GM10248 (cell line): ENCODE measurements at regions of chr3 and their contacts with region 1.

Region 1: GRCh38 chr3:124552239-124552638 is 178.0 kb upstream of the UMPS start:
- DNase-seq: no peak
- CTCF ChIP-seq: no peak

Region 2: GRCh38 chr3:123272547-123272946 is 1279.7 kb before region 1 on chr3:
- CTCF ChIA-PET with region 1: no interaction called
- POLR2A ChIA-PET with region 1: no interaction called
- DNase-seq: no peak
- CTCF ChIP-seq: no peak

Region 3: DNA sequence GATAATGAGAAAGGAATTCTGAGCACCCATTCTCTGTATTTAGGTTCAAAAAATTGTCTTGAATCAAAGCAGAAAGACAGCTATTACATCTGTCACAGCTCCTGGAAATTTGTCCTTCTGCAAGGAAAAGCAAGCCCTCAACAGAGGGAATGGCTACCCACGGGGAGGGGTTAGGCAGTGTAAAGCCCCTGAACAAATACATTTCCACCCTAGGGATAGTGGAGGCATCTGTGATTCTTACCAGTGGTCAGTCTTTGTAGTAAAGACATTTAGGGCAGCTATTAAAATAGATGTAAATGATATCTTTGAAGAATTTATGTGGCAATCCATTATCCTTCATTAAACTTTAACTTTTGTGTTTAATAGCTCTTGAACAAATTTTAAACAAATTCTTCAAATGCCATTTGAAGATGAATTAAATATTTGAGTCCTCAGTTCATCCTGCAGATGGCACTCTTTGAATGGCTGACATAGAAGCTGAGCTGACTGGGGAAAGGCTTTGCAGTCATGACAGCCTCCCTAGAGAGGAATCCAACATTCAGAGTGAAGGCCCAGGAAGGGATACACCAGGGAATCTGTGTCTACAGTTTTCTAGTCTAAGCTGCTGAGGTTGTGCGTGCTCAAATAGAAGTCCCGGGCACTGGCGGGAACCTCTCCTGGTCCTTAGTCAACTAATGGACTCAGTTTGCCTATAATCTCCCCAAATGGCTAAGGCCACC is 200.7 kb before region 1 on chr3:
- CTCF ChIA-PET with region 1: interaction called, 19 read pairs
- POLR2A ChIA-PET with region 1: no interaction called
- DNase-seq: peak; percentile 47
- CTCF ChIP-seq: peak; percentile 44

Region 4: DNA sequence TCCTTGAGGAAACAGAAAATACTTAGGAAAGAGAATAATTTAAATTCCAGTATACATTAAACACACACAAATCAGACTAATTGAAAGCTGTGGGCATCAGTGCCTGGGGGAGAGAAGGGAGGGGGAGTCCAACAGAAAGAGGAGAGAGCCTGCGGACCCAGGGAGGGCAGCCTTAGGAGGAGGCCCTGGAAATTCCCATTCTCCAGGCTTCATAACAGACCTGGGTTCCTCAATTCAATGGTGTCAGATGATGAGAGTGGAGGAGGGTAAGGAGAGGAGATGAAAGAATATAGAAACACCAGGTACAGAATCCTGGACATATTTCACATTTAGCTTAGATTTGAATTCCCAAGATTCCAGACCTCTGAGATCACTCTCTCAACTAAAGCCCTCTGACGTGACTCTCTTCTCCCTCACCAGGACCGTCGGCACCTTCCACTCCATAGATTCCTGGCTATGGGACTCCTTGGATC is 142.4 kb before region 1 on chr3:
- CTCF ChIA-PET with region 1: no interaction called
- POLR2A ChIA-PET with region 1: no interaction called
- DNase-seq: no peak
- CTCF ChIP-seq: no peak

Region 5: GRCh38 chr3:124428372-124429128 is 123.7 kb before region 1 on chr3:
- CTCF ChIA-PET with region 1: no interaction called
- POLR2A ChIA-PET with region 1: no interaction called
- DNase-seq: no peak
- CTCF ChIP-seq: no peak

Region 6: DNA sequence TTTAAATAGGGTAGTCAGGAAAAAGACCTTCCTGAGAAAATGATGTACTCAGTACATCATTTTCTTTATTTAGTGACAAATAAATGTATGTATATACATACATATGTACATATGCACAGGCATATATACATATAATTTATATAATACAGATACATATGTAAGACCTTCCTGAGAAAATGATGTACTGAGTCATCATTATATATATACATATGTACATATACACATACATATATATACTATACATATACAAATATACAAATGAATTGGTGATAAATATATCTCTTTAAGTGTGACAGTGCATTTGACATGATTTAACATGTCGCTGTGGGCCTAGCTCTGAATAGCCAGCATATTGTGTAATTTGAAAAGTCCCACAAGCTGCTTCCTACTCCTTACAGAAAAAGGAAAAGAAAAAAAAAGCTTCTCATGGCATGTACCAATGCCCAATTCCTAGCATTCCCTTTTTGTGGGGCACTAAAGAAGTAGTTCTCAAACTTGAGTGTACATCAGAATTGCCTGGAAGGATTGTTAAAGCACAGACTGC is 30.1 kb before region 1 on chr3:
- CTCF ChIA-PET with region 1: interaction called, 10 read pairs
- POLR2A ChIA-PET with region 1: no interaction called
- DNase-seq: no peak
- CTCF ChIP-seq: no peak

Region 7: GRCh38 chr3:124540550-124541211 is 11.6 kb before region 1 on chr3:
- CTCF ChIA-PET with region 1: interaction called, 12 read pairs
- POLR2A ChIA-PET with region 1: no interaction called
- DNase-seq: no peak
- CTCF ChIP-seq: no peak